Mammary epithelial cell (primary cell): ENCODE measurements at regions of chr19 and their contacts with region 1.

Region 1: GRCh38 chr19:35655600-35655999 is 7.5 kb downstream of the COX6B1 start:
- DNase-seq: no peak
- H3K4me3 ChIP-seq: no peak overlapping the region
- H3K27ac ChIP-seq: no peak overlapping the region
- H3K4me1 ChIP-seq: no peaks in the 10 kb centered on the region
- H3K27me3 ChIP-seq: no peaks in the 10 kb centered on the region
- CTCF ChIP-seq: no peak

Region 2: DNA sequence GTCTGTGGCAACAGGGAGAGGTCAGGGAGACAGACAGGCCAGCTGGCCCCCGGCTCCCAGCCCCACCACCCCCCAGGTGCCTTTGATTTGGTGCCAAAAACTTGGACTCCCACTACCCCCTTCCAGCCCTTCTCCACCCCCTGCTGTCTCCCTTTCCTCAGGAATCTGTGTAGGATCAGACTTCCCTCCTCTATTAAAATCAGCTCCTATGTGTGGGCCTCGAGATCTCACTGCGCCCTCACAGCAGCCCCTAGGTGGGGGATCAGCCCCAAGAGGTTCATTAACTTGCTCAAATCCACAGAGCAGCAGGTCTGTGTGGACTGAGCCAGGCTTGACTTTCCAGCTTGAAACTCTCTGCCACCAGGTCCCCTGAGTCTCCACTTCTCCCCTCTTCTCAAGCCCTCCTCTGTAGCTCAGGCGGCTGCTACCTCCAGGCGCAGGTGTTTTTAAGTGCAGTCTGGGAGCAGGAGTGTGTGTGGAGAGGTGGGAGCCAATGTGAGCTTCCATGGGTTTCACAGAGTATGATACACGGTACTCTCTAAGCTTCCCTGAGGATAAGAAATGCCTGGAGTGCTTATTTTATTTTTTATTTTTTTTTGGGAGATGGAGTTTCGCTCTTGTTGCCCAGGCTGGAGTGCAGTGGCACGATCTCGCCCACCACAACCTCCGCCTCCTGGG is 120.7 kb before region 1 on chr19:
- CTCF ChIA-PET with region 1: no interaction called
- dilution Hi-C with region 1: no loop called
- in situ Hi-C with region 1: no loop called
- intact Hi-C with region 1: no loop called
- DNase-seq: no peak
- H3K4me3 ChIP-seq: no peak overlapping the region
- H3K27ac ChIP-seq: no peak overlapping the region
- H3K4me1 ChIP-seq: peaks cover 5% of the 10 kb centered on the region
- H3K27me3 ChIP-seq: no peaks in the 10 kb centered on the region
- CTCF ChIP-seq: no peak

Region 3: DNA sequence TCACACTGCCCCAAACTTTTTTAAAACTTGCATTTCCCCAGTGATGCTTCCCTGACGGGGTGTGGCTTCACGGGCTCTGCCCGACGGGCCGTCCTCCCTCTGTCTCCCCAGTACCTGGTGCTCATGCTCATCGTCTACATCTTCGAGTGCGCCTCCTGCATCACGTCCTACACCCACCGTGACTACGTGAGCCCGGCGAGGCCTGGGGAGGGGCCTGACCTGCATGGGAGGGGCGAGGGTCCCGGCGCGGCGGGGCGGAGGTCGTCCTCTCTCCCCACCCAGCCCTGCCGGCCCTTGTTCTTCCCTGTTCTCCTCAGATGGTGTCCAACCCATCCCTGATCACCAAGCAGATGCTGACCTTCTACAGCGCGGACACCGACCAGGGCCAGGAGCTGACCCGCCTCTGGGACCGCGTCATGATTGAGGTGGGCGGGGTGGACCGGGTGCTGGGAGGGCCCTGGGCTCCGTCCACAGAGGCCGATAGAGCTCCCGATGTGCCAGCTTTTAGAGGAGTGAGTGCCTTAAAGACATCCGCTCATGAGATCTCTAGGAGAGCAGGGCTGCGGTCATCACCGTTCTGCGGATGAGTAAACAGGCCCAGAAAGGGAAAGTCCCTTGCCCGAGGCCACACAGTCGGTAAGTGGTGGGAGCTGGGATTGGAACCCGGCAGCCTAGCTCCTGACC is 17.7 kb after region 1 on chr19:
- CTCF ChIA-PET with region 1: interaction called, 14 read pairs
- dilution Hi-C with region 1: no loop called
- in situ Hi-C with region 1: no loop called
- intact Hi-C with region 1: no loop called
- DNase-seq: peak; percentile 84
- H3K4me3 ChIP-seq: peak overlapping the region; percentile 29 to 51 (median 48)
- H3K27ac ChIP-seq: no peak overlapping the region
- H3K4me1 ChIP-seq: peaks cover 4% of the 10 kb centered on the region
- H3K27me3 ChIP-seq: no peaks in the 10 kb centered on the region
- CTCF ChIP-seq: no peak